Right ventricle myocardium superior (tissue), 1 donor: ENCODE measurements at regions of chr2 and their contacts with region 1.

Region 1: GRCh38 chr2:191811807-191812602 is 34.9 kb downstream of the CAVIN2 start:
- DNase-seq: peak; percentile 55
- ATAC-seq: peak; percentile 96

Region 2: DNA sequence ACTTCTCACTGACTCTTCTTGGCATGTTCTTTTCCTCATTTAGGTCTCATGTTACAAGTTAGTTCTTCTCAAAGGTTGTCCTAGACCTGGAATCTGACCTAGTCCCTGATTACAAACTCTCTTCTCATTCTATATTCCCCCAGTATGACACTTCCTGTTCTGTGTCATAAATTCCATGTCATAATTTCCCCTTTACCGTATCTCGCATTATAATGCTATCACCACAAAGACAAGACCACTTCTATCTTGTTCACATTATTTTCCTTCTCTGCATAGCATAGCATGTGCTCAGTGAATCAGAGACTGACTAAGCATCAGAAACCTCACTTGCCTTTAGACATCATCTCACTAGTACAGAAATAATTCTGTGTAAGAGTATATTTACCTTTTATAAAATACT is 98.5 kb after region 1 on chr2:
- intact Hi-C with region 1: loop called (anchors 10 kb)
- DNase-seq: no peak
- ATAC-seq: no peak

Region 3: GRCh38 chr2:192162392-192163042 is 350.5 kb after region 1 on chr2:
- intact Hi-C with region 1: loop called (anchors 1 kb)
- DNase-seq: no peak
- ATAC-seq: peak; percentile 90